Astrocyte of the cerebellum (primary cell): ENCODE measurements at regions of chr15 and their contacts with region 1.

Region 1: DNA sequence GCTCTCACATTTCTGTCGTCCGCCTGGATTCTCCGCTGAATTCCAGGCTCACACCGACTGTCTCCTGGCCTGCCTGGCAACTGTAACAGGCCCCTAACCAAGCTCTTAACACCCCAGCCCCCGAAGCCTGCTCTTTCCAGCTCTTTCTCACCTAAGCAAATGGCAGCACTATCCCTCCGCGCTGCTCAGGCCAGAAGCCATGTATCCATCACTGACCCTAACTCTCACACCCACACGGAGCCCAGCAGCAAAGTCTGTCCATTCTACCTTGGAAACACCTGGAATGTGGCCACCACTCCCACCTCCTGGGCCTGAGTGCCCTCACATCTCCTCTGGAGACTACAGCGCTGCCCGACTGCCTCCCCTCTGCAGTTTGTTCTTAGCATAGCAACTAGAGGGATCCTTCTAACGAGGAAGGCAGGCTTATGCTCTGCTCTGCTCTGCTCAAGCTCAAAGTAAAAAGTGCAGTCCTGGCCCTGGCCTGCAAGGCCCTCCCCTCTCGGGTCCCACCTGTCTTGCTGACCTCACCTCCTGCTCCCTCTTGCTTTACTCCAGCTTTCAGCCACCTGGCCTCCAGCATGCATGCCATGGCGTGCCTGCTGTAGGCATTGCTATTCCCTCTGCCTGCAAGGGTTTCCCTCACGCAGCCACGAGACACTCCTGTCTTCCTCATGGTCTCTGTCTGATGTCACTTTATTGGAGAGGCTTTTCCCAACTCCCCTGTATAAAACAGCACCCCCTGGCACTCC is 27.2 kb downstream of the FEM1B start:
- DNase-seq: no peak
- H3K4me3 ChIP-seq: no peak overlapping the region
- CTCF ChIP-seq: peak; percentile 7

Region 2: GRCh38 chr15:68354923-68355322 is 50.2 kb after region 1 on chr15:
- in situ Hi-C with region 1: loop called (anchors 5 kb)
- DNase-seq: peak; percentile 98
- H3K4me3 ChIP-seq: no peak overlapping the region
- CTCF ChIP-seq: no peak